Caco-2 (cell line): ENCODE measurements at regions of chr5 and their contacts with region 1.

Region 1: DNA sequence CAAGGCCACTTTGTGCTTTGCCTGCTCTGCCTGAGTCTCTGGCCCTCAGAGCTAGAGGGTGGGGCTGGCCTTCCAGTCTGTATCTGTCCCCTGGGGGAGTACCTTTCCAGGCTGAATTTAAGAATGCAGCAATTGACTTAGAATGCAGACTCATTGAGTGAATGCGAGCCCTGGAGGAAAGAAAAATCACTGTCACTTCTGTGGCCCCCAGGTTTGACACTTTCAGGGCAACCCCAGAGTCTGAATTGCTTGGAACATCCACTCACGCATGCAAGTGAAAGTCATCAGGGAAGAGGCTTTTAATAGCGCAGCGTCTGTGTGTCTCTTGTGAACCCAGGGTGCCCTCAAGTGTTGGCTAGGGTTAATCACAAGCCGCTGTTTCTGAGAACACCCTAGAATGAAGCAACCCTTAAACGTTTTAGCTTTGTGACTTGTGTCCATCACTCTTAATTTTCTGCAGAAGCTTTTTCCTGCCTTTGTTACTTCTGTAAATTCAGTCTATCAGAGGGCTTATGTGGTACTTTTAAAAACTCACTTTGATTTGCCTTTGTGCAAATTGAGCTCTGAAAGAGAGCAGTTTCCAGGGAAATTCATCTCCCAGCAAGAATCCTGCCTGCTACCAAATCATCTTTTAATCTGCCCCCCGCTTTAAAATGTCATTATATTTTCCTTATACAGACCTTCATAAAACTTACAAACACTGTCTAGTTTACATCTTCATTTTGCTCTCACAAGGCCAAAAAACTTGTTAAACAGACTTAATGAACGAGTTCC is 146.8 kb upstream of the IQGAP2 start:
- DNase-seq: peak; percentile 67 to 68
- H3K4me3 ChIP-seq: no peak overlapping the region
- H3K4me3 Mint-ChIP-seq: no peak overlapping the region
- H3K27ac Mint-ChIP-seq: no peak overlapping the region
- H3K4me1 ChIP-seq: peaks cover 4% of the 10 kb centered on the region; the same call in 1 of the 2 replicates
- H3K4me1 Mint-ChIP-seq: no peaks in the 10 kb centered on the region
- H3K27me3 ChIP-seq: no peaks in the 10 kb centered on the region
- H3K27me3 Mint-ChIP-seq: peaks cover 12% of the 10 kb centered on the region
- CTCF ChIP-seq: peak; percentile 71 to 73

Region 2: DNA sequence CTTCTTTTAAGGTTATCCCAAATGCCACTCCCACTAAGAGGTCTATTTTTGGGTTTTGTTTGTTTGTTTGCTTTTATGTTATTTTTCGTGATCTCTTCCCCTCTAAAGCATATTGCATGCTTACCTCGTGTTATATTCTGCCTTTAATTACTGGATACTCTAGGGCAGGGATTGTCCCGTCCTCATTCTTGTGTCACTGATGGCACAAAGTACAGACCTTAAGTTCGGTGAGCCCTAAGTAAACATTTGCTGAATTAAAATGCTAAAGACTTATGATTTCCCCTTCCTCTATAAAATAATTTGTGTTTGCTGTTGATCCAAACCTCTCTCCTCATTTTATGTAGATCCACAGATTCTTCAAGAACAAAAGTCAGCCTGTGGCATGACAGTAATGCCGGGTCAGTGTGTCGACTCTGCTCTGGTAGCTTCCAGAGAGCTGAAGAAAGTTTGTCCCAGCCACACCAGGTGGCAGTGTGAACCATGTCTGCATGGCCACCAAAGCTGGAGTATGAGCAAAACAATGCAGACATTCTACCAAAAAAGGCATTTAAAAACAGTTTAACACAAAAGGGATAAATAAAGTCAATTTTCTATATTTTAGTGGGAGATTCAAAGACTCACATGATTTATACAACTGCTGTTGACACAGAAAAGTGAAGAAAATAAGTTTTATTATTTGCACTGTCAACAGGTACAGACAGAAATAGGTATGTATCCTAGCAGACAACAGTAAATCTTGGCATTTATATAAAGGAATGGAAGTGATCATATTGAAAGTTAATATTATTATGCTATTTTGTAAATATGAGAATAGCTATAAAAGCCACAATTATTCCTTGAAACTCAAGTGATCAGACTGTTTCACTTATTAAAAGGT is 521.2 kb before region 1 on chr5:
- CTCF ChIA-PET with region 1: interaction called, 4 read pairs
- POLR2A ChIA-PET with region 1: no interaction called
- intact Hi-C with region 1: loop called (anchors 1 kb)
- DNase-seq: peak; percentile 61 to 62
- H3K4me3 ChIP-seq: no peak overlapping the region
- H3K4me3 Mint-ChIP-seq: no peak overlapping the region
- H3K27ac Mint-ChIP-seq: no peak overlapping the region
- H3K4me1 ChIP-seq: no peaks in the 10 kb centered on the region
- H3K4me1 Mint-ChIP-seq: no peaks in the 10 kb centered on the region
- H3K27me3 ChIP-seq: no peaks in the 10 kb centered on the region; the same call in 1 of the 2 replicates
- H3K27me3 Mint-ChIP-seq: peaks cover 7% of the 10 kb centered on the region
- CTCF ChIP-seq: peak; percentile 59 to 80

Region 3: DNA sequence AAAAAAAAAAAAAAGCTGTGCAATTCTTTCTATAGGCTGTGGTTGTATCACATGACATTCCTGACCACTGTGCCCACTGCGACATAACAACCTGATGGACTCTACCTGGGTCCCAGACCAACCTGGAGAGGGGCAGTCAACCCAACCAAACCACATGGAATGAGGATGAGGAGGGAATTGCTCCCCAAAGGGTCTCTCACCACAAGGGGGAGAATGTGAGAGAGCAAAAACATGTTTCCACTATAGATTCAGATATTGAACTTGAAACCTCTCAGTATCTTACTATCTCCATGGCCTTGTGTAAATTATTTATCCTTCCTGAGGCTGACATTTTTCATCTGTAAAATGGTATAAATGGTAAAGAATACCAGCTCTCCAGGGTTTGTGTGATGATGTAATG is 240.0 kb before region 1 on chr5:
- CTCF ChIA-PET with region 1: no interaction called
- POLR2A ChIA-PET with region 1: no interaction called
- intact Hi-C with region 1: loop called (anchors 10 kb)
- DNase-seq: peak in 1 of 2 experiments; percentile 3
- H3K4me3 ChIP-seq: no peak overlapping the region
- H3K4me3 Mint-ChIP-seq: no peak overlapping the region
- H3K27ac Mint-ChIP-seq: no peak overlapping the region
- H3K4me1 ChIP-seq: no peaks in the 10 kb centered on the region
- H3K4me1 Mint-ChIP-seq: no peaks in the 10 kb centered on the region
- H3K27me3 ChIP-seq: no peaks in the 10 kb centered on the region
- H3K27me3 Mint-ChIP-seq: peaks cover 15% of the 10 kb centered on the region
- CTCF ChIP-seq: peak; percentile 11 to 20

Region 4: DNA sequence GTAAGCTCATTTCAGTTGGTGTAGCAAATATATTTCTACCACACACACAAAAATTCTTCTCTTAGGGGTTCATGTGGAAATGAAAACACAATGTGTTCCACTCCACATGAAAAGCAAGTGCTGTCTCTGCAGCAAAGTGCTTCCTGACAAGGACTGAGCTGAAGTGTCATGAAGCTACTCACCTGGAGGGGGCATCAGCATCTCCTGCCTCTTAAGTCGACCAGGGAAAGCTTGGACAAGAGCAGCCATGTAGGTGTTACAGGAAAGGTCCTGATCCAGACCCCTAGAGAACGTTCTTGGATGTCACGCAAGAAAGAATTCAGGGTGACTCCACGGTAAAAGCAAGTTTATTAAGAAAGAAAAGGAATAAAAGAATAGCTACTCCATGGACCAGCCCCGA is 110.4 kb before region 1 on chr5:
- CTCF ChIA-PET with region 1: no interaction called
- POLR2A ChIA-PET with region 1: no interaction called
- intact Hi-C with region 1: loop called (anchors 1 kb)
- DNase-seq: peak; percentile 32 to 46
- H3K4me3 ChIP-seq: no peak overlapping the region
- H3K4me3 Mint-ChIP-seq: no peak overlapping the region
- H3K27ac Mint-ChIP-seq: no peak overlapping the region
- H3K4me1 ChIP-seq: no peaks in the 10 kb centered on the region
- H3K4me1 Mint-ChIP-seq: no peaks in the 10 kb centered on the region
- H3K27me3 ChIP-seq: 0 out of 2 replicates have a peak, but pooled peaks cover under 1% of the 10 kb centered on the region
- H3K27me3 Mint-ChIP-seq: peaks cover 17% of the 10 kb centered on the region
- CTCF ChIP-seq: peak; percentile 24 to 34

Region 5: DNA sequence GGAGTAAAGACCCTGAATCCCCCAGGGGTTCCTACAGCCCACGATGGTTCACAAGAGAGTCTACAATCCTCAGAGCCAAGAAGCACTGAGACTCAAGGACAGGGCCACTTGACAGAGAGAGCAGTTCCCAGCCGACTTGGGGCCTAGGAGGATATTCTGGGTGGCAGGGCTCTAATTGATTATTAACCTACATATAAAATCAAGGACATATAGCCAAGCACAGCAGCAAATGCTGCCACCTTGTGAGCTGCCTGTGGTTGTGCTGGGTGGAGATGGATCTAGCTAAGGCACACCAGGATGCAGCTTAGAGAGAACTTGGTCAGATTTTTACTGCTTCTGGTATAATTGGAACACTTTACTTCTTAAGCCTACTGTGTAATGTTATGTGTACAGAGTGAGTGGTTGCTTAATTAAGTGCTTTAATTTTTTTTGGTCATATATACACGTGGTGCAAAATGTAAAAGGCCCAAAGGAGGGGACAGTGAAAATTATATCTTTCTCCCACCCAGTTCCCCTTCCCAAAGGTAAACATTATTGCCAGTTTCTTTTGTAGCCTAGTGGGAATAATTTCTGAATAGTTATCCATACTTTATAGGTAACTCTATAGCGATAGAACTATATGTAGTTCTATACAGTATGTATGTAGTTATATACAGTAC is 288.1 kb after region 1 on chr5:
- CTCF ChIA-PET with region 1: no interaction called
- POLR2A ChIA-PET with region 1: no interaction called
- intact Hi-C with region 1: loop called (anchors 5 kb)
- DNase-seq: peak; percentile 69 to 77
- H3K4me3 ChIP-seq: no peak overlapping the region
- H3K4me3 Mint-ChIP-seq: no peak overlapping the region
- H3K27ac Mint-ChIP-seq: peak overlapping the region; percentile 51
- H3K4me1 ChIP-seq: peaks cover 76% of the 10 kb centered on the region
- H3K4me1 Mint-ChIP-seq: peaks cover 35% of the 10 kb centered on the region
- H3K27me3 ChIP-seq: no peaks in the 10 kb centered on the region
- H3K27me3 Mint-ChIP-seq: no peaks in the 10 kb centered on the region
- CTCF ChIP-seq: peak; percentile 68 to 87